Ovary (tissue), 10 donors: ENCODE measurements at regions of chr3 and their contacts with region 1.

Region 1: GRCh38 chr3:119279101-119279554 is 15.1 kb upstream of the ARHGAP31 start:
- DNase-seq: peak in 4 of 5 donors; percentile 40 to 64 (median 48)
- H3K4me3 ChIP-seq: no peak overlapping the region
- H3K27ac ChIP-seq: peak overlapping the region in 1 of 2 donors; percentile 51
- H3K4me1 ChIP-seq: peaks cover 6% of the 10 kb centered on the region
- H3K27me3 ChIP-seq: no peaks in the 10 kb centered on the region
- CTCF ChIP-seq: no peak
- EP300 ChIP-seq: no peak
- POLR2A ChIP-seq: no peak

Region 2: GRCh38 chr3:119352849-119353502 is 73.8 kb after region 1 on chr3:
- intact Hi-C with region 1: loop called in 1 of 4 experiments (anchors 5 kb)
- DNase-seq: no peak
- H3K4me3 ChIP-seq: no peak overlapping the region
- H3K27ac ChIP-seq: peak overlapping the region; percentile 17 to 44
- H3K4me1 ChIP-seq: peaks cover 12% of the 10 kb centered on the region
- H3K27me3 ChIP-seq: no peaks in the 10 kb centered on the region
- CTCF ChIP-seq: peak in 2 of 3 donors; percentile 57 to 63
- EP300 ChIP-seq: no peak
- POLR2A ChIP-seq: no peak

Region 3: DNA sequence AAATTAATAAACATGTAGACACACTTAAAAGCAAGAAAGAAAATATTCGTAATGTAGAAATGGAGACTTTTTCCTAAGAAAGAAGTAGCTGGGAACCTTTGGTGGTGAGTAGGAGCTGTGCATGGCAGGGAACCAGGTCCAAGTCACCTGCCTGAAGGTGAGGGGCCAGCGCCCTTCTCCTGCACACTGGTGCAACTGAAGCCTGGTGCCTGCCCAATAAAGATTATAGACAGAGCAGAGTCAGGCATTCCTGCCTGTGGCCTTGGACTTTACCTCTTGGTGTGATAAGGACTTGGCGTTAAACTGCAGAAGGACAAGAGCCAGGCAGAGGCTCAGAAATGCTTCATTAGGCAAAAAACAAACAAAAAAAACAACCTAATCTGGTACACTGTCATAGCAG is 437.9 kb after region 1 on chr3:
- intact Hi-C with region 1: no loop called
- DNase-seq: peak in 4 of 5 donors; percentile 19 to 48 (median 32)
- H3K4me3 ChIP-seq: no peak overlapping the region
- H3K27ac ChIP-seq: no peak overlapping the region
- H3K4me1 ChIP-seq: peaks cover 7% of the 10 kb centered on the region
- H3K27me3 ChIP-seq: no peaks in the 10 kb centered on the region
- CTCF ChIP-seq: no peak
- EP300 ChIP-seq: no peak
- POLR2A ChIP-seq: no peak